ENCODE measurements at regions of chr5 and their contacts with region 1.

Region 1: DNA sequence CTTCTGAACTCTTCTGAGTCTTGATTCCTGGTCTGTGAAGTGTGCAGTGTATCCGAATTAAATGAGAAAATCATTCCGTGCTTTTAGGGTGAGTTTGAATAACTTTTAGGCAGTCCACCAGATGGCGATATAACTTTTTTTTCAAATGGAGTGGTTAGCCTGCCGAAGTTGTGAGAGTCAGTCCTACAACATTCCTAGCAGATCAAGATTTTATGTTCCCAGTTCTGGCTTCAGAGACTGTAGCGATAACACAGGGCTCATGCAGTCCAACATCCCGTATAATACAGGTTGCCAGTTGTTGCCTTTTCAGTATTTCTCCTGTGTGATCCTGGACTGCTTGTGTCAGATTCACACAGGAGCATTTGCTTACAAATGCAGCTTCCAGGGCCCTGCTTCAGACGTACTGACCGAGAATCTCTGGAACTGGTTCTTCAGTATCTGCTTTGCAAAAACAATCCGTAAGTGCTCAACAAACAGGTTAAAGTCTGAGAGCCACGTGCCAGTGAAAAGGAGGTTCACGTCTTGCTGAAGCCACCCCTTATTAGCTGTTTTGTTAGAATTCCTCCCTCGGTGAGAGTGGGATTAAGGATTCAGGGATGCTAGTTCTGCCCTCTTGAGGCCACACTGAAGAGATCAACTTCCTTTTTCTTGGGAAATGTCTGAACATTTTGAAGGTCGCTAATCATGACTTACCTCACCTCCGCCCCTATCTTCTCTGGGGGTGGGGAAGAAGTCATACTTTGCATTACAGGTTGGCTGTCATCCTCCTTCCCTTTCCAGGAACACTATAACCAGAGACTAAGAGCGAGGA is 22.8 kb downstream of the SMIM3 start:
- DNase-seq: peak; percentile 87
- ATAC-seq: peak; percentile 95
- H3K4me3 ChIP-seq: peak overlapping the region; percentile 38 to 65
- H3K27ac ChIP-seq: peak overlapping the region; percentile 82
- H3K4me1 ChIP-seq: peaks cover 12% of the 10 kb centered on the region
- H3K27me3 ChIP-seq: no peaks in the 10 kb centered on the region
- CTCF ChIP-seq: peak; percentile 82

Region 2: DNA sequence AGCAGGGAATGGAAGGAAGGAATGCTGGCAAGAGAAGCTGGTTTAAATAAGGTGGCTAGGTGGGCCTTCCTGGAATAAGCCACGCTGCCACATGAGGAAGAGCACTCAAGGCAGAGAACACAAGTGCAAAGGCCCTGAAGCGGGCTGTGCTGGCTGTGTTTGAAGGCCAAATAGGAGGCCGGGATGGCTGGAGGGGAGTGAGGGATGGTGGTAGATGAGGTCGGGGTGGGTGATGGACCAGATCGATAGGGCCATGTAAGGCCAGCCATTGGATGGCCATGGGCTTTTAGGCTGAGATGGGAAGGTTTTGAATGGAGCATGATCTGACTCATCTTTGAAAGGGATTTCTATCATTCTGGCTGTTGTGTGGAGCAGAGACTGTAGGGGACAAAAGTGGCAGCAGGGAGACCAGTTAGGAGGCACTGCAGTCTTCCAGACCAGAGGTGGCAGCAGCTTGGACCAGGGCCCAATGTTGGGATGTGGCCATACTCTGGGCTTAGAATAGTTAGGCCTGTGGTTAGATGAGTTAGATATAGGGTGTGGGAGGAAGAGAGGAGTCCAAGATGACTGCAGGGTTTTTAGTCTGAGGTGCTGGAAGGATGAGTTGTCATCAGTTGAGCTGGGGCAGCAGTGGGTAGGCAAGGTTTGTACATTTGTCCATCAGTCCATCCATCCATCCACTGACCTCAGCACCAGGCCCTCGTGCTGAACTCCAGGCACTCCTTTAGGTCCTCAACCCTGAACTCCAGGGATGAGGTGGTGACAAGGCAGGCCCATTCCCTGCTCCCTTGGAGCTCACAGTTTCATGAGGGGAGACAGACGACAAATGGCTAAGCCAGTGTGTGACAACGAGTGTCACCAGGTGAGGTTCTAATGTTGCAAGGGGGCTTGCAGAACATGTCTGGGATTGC is 263.1 kb before region 1 on chr5:
- CTCF ChIA-PET with region 1: no interaction called
- POLR2A ChIA-PET with region 1: no interaction called
- in situ Hi-C with region 1: no loop called
- intact Hi-C with region 1: no loop called
- DNase-seq: no peak
- ATAC-seq: peak; percentile 52; the same call in 1 of the 2 replicates
- H3K4me3 ChIP-seq: no peak overlapping the region
- H3K27ac ChIP-seq: no peak overlapping the region
- H3K4me1 ChIP-seq: no peaks in the 10 kb centered on the region
- H3K27me3 ChIP-seq: no peaks in the 10 kb centered on the region
- CTCF ChIP-seq: no peak

Region 3: DNA sequence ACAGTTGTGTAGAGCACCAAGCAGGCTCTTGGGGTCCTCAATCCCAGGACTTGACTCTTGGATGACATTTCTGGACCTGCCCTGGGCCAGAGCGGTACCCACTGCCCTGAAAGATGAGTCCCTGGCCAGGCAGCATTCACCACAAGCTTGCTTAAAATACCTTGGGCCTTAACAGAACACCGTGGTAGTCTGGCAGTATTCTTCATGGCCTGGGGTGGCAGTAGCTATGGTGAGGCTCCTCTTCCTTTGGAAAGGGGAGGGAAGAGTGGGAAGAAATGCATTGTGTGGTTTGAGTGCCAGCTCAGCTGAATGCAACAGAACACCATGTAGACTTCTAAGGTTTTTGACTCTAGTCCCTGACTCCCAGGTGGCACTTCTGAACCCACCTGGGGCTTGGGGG is 15.6 kb after region 1 on chr5:
- CTCF ChIA-PET with region 1: no interaction called
- POLR2A ChIA-PET with region 1: no interaction called
- in situ Hi-C with region 1: no loop called
- intact Hi-C with region 1: no loop called
- DNase-seq: no peak
- ATAC-seq: no peak
- H3K4me3 ChIP-seq: no peak overlapping the region
- H3K27ac ChIP-seq: no peak overlapping the region
- H3K4me1 ChIP-seq: no peaks in the 10 kb centered on the region
- H3K27me3 ChIP-seq: no peaks in the 10 kb centered on the region
- CTCF ChIP-seq: no peak

Region 4: DNA sequence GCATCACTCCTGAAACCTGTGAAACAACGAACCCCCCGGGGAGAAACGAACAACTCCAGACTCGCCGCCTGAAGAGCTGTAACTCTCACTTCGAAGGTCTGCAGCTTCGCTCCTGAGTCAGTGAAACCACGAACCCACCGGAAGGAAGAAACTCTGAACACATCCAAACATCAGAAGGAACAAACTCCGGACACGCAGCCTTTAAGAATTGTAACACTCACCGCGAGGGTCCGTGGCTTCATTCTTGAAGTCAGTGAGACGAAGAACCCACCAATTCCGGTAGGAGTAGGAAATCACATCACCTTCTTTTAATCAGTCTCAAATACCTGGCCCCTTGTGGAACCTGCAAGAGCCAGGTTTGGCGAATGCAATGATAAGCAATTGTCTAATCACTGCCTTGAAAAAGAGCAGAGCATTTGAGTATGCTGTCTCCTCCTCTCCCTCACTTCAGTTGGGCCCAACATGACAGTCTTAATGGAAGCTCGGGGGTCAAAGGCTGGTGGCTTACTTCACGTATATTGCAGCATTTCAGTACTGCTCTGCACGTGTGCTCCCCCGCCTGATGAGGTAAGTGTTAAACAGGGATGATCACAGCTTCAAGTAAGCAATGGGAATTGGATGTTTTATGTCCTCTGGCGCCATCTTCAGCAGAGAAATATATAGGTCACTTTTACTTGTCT is 45.5 kb after region 1 on chr5:
- CTCF ChIA-PET with region 1: interaction called, 25 read pairs
- POLR2A ChIA-PET with region 1: no interaction called
- in situ Hi-C with region 1: no loop called
- intact Hi-C with region 1: loop called (anchors 2 kb)
- DNase-seq: peak; percentile 51
- ATAC-seq: peak; percentile 93
- H3K4me3 ChIP-seq: peak overlapping the region; percentile 5 to 37; a peak in 3 of 4 replicates
- H3K27ac ChIP-seq: no peak overlapping the region
- H3K4me1 ChIP-seq: peaks cover 5% of the 10 kb centered on the region; the same call in 1 of the 2 replicates
- H3K27me3 ChIP-seq: no peaks in the 10 kb centered on the region
- CTCF ChIP-seq: peak; percentile 85